ENCODE measurements at regions of chr1 and their contacts with region 1.

Region 1: DNA sequence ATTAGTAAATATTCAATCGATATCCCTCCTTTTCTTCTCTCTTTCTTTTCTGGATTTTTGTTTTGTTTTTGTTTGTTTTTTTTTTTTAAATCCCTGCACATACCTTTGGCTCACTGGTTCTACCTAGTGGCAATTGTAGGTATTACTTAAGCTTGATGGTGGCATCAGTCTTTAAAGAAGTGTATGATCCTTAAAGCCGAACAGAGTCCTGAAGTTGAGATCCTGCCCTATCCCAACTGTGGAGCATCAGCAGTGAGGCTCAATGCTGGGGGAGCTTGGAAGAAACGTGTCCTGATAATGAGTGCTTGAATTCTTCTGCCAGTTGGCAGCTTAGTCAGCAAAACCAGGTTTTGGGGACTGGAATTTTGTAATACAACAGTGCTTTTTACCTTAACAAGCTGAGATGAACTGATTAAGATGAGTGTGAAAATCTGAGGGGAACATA is 60.8 kb downstream of the FASLG start:
- DNase-seq: peak; percentile 70
- H3K4me3 ChIP-seq: no peak overlapping the region
- H3K27ac ChIP-seq: no peak overlapping the region
- H3K4me1 ChIP-seq: no peaks in the 10 kb centered on the region
- H3K27me3 ChIP-seq: no peaks in the 10 kb centered on the region
- CTCF ChIP-seq: peak; percentile 53 to 64
- POLR2A ChIP-seq: no peak

Region 2: DNA sequence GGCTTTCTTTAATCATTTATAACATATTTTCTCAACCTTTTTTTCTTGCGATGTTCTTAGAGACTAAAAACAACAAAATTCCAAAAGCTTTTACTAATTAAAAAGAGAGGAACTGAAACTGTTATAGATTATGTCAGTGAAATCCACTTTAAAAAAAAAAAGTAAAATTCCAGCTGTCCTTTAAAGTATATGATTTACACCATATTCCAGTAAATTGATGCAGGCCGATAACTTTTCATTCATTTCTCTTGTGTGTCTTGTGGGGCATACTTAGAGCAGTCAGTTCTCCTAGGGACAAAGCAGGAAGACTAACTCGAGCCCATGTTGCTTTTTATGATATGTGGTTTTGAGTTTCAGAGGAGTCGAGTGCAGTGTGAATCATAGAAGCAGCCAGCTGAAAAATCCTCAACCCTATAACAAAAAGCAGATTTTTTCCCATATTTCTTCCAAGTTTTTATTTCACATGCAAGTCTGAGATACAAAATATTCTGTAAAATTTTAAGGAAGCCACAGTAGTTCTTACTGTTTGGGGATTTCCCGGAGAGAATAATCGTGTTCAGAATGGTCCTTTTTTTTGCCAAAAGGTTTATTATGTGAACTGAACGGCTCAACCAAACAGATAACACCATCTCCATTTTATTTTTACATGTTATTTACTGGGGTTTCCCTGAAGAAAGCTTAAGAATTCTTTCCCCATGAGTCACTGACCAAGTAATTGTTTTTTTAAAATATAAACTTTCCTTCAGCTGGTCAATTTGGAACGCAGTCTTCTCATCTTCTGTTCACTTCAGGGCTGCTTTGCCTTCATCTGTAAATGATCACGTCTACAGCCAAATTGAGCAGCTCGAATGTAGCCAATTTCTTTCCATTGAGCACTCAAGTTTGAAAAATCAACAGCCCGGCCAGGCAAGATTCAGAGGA is 376.2 kb before region 1 on chr1:
- CTCF ChIA-PET with region 1: no interaction called
- POLR2A ChIA-PET with region 1: no interaction called
- dilution Hi-C with region 1: no loop called
- intact Hi-C with region 1: no loop called
- DNase-seq: peak; percentile 86
- H3K4me3 ChIP-seq: peak overlapping the region in 1 of 3 experiments; percentile 32
- H3K27ac ChIP-seq: peak overlapping the region; percentile 99
- H3K4me1 ChIP-seq: peaks cover 26% of the 10 kb centered on the region
- H3K27me3 ChIP-seq: no peaks in the 10 kb centered on the region
- CTCF ChIP-seq: no peak
- POLR2A ChIP-seq: no peak

Region 3: DNA sequence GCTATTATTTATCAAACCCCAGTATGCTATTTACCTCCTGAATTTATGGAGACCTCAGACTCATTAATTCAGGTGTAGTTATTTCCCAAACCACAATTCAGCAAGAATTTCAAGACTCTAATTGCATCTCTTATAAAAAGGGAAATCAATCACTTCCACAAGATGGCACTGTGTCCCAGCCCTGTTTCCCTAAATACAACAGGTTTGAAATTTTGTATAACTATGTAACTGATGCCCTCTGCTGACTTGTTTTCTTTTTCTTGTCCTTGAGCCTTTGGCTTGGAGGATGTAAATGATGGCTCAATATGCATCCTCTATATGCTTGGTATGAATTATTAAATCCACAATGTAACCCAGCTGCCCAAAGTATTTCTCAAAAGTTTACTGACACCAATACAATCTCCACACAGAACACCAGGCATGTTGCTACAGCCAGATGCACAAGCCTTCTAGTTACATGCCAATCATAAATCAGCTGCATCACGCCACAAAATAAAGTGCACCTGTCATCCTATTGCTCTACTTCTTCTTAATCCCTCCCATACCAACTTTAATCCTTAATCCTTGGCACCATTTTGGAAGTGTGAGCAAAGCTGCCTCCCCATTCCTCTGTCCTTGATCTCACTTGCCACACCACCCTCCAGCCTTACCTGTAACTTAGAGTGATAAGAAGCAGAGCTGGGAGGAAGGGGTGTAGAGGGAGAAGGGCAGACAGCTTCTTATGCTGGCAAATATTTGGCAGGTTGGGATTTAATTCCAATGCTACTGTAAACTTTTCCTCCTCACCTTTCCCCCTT is 290.2 kb before region 1 on chr1:
- CTCF ChIA-PET with region 1: interaction called, 21 read pairs
- POLR2A ChIA-PET with region 1: no interaction called
- dilution Hi-C with region 1: no loop called
- intact Hi-C with region 1: loop called (anchors 1 kb)
- DNase-seq: peak; percentile 78
- H3K4me3 ChIP-seq: no peak overlapping the region
- H3K27ac ChIP-seq: no peak overlapping the region
- H3K4me1 ChIP-seq: no peaks in the 10 kb centered on the region
- H3K27me3 ChIP-seq: no peaks in the 10 kb centered on the region
- CTCF ChIP-seq: peak; percentile 47 to 64
- POLR2A ChIP-seq: no peak

Region 4: DNA sequence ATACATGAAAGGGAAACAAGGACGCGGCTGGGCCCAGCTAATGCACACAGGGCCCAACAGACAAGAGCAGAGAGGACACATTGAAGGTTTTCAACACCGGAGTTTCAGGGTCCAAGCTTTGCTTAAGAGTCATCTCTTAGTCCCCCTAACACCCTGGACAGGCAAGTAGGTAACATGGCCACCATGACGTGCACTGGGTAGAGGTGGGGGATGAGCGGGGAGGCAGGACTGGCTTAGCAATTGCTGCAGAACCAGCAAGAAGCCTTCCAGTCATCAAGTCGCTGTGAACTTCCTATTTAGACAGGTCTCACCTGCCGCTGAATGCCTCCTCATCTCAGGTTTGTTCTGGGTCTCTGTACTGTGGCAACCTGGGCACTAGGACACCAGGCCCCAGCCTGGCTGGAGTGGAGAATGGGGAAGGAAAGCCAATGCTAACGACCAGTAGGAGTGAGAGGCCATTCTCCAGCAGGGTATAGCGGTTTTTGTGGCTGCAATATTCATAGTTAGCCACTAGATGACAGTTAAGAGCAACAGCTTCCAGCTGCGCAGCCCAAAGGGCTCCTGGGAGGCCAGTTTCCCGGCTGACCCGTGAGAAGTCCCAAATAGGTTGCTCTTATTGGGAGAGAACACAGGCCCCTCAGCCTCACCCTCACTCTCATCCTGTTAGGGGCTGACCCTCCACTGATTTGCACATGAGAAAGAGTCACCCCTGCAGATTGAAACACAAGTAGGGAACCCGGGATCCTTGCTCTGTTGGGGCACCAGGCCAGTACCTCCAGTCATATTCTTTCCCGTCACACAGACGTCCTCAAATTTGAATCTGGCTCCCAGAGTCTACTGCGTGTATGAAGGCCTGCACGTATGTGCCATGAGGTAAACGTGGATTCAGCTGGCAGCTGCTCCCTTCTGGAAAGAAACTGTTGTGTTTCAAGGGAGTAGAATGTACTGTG is 269.9 kb before region 1 on chr1:
- CTCF ChIA-PET with region 1: interaction called, 61 read pairs
- POLR2A ChIA-PET with region 1: no interaction called
- dilution Hi-C with region 1: no loop called
- intact Hi-C with region 1: loop called (anchors 1 kb)
- DNase-seq: peak; percentile 61
- H3K4me3 ChIP-seq: no peak overlapping the region
- H3K27ac ChIP-seq: no peak overlapping the region
- H3K4me1 ChIP-seq: peaks cover 22% of the 10 kb centered on the region
- H3K27me3 ChIP-seq: no peaks in the 10 kb centered on the region
- CTCF ChIP-seq: peak; percentile 67 to 86
- POLR2A ChIP-seq: no peak

Region 5: GRCh38 chr1:172588296-172589291 is 131.1 kb before region 1 on chr1:
- CTCF ChIA-PET with region 1: interaction called, 10 read pairs
- POLR2A ChIA-PET with region 1: no interaction called
- dilution Hi-C with region 1: no loop called
- intact Hi-C with region 1: no loop called
- DNase-seq: peak; percentile 90
- H3K4me3 ChIP-seq: peak overlapping the region in 2 of 3 experiments; percentile 30 to 58
- H3K27ac ChIP-seq: peak overlapping the region; percentile 83
- H3K4me1 ChIP-seq: peaks cover 43% of the 10 kb centered on the region
- H3K27me3 ChIP-seq: no peaks in the 10 kb centered on the region
- CTCF ChIP-seq: no peak
- POLR2A ChIP-seq: peak; percentile 25

Region 6: DNA sequence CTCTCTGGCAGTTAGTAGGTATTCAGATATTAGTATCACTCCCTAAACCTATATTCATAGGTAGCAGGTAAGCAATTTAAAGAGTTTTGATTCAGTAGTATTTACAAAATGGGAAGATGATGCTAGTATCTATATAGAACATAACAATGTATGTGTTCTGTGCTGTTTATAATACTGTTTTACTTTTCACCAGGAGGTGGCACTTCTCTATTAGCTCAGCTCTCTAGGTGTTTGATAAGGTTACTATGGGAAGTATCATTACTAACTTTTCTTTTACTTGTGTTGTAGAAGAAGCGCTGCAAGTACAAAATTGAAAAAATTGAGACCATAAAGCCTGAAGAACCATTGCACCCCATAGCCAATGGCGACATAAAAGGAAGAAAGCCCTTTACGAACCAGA is 110.2 kb before region 1 on chr1:
- CTCF ChIA-PET with region 1: interaction called, 172 read pairs
- POLR2A ChIA-PET with region 1: no interaction called
- dilution Hi-C with region 1: no loop called
- intact Hi-C with region 1: loop called (anchors 1 kb)
- DNase-seq: no peak
- H3K4me3 ChIP-seq: no peak overlapping the region
- H3K27ac ChIP-seq: no peak overlapping the region
- H3K4me1 ChIP-seq: peaks cover 5% of the 10 kb centered on the region
- H3K27me3 ChIP-seq: no peaks in the 10 kb centered on the region
- CTCF ChIP-seq: peak in 1 of 2 donors; percentile 17
- POLR2A ChIP-seq: no peak

Region 7: DNA sequence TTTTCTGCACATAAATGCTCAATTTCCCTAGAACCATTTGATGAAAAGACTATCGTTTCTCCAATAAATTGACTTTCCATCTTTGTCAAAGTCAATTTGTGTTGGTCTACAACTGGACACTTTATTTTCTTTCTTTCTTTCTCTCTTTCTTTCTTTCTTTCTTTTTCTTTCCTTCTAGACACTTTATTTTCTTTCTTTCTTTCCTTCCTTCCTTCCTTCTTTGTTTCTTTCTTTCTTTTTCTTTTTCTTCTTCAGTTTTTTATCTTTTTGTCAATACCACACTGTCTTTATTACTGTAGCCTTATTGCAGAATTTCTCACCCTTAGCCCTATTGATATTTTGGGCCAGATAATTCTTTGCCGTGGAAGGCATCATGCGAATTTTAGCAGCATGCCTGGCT is 12.7 kb after region 1 on chr1:
- CTCF ChIA-PET with region 1: interaction called, 11 read pairs
- POLR2A ChIA-PET with region 1: no interaction called
- dilution Hi-C with region 1: no loop called
- intact Hi-C with region 1: no loop called
- DNase-seq: no peak
- H3K4me3 ChIP-seq: no peak overlapping the region
- H3K27ac ChIP-seq: no peak overlapping the region
- H3K4me1 ChIP-seq: no peaks in the 10 kb centered on the region
- H3K27me3 ChIP-seq: no peaks in the 10 kb centered on the region
- CTCF ChIP-seq: no peak
- POLR2A ChIP-seq: no peak

Region 8: DNA sequence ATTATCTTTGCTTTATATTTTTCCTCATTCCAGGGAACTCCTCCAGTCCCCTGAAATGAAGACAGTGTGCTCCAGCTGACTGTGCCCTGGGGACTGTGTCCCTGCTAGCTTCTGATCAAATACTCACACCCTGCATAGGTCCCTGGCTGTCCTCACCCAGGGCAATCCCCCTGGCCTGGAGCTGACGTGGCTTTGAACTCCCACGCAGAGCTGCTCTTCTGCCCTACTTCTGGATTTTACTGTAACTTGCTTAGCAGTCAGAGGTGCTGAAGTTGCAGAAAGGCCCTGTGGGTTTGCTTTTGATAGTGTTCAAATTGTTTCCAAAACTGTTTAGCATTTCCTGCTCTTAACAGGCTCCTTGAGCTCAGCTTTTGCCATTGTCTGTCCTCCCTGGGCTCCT is 125.7 kb after region 1 on chr1:
- CTCF ChIA-PET with region 1: no interaction called
- POLR2A ChIA-PET with region 1: no interaction called
- dilution Hi-C with region 1: no loop called
- intact Hi-C with region 1: no loop called
- DNase-seq: no peak
- H3K4me3 ChIP-seq: no peak overlapping the region
- H3K27ac ChIP-seq: no peak overlapping the region
- H3K4me1 ChIP-seq: peaks cover 3% of the 10 kb centered on the region
- H3K27me3 ChIP-seq: no peaks in the 10 kb centered on the region
- CTCF ChIP-seq: no peak
- POLR2A ChIP-seq: no peak

Measured in endothelial cell of umbilical vein (primary cell).